Naive thymus-derived CD4-positive, alpha-beta T cell (primary cell): ENCODE measurements at regions of chr4 and their contacts with region 1.

Region 1: DNA sequence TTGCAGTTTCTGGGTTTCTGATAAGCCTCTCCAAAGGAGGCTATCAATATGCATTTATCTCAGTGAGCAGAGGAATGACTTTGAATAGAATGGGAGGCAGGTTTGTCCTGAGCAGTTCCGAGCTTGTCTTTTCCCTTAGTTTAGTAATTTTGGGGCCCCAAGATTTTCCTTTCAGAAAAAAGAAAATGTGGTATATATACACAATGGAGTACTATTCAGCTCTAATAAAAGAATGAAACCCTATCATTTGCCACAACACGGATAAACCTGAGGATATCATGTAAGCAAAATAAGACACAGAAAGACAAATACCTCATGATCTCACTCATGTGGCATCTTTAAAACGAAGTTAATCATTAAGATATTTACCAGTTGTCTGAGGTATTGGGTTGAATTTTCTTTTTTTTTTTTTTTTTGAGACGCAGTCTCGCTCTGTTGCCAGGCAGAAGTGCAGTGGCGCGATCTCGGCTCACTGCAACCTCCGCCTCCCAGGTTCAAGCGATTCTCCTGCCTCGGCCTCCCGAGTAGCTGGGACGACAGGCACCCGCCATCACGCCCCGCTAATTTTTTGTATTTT is 540 bp downstream of the ZNF721 start:
- DNase-seq: no peak
- ATAC-seq: peak; percentile 60
- H3K4me3 ChIP-seq: peak overlapping the region; percentile 96
- H3K4me3 Mint-ChIP-seq: peak overlapping the region; percentile 90 to 97 (median 94)
- H3K27ac ChIP-seq: peak overlapping the region; percentile 94
- H3K27ac Mint-ChIP-seq: peak overlapping the region; percentile 91 to 98 (median 97)
- H3K4me1 ChIP-seq: peaks cover 13 to 16% of the 10 kb centered on the region in 2 donors
- H3K4me1 Mint-ChIP-seq: peaks cover 19 to 53% (median 44%) of the 10 kb centered on the region in 7 donors
- H3K27me3 ChIP-seq: no peaks in the 10 kb centered on the region
- H3K27me3 Mint-ChIP-seq: no peaks in the 10 kb centered on the region

Region 2: GRCh38 chr4:473570-474457 is 24.6 kb before region 1 on chr4:
- CTCF ChIA-PET with region 1: no interaction called
- POLR2A ChIA-PET with region 1: interaction called, 7 read pairs
- intact Hi-C with region 1: loop called (anchors 1 kb)
- DNase-seq: peak; percentile 78 to 98 (median 96)
- ATAC-seq: peak; percentile 99
- H3K4me3 ChIP-seq: peak overlapping the region; percentile 93
- H3K4me3 Mint-ChIP-seq: peak overlapping the region; percentile 93 to 99 (median 98)
- H3K27ac ChIP-seq: peak overlapping the region; percentile 92
- H3K27ac Mint-ChIP-seq: peak overlapping the region; percentile 98 to 100 (median 100)
- H3K4me1 ChIP-seq: peaks cover 5 to 7% of the 10 kb centered on the region in 2 donors
- H3K4me1 Mint-ChIP-seq: peaks cover 17 to 47% (median 37%) of the 10 kb centered on the region in 7 donors
- H3K27me3 ChIP-seq: no peaks in the 10 kb centered on the region
- H3K27me3 Mint-ChIP-seq: no peaks in the 10 kb centered on the region

Region 3: GRCh38 chr4:663438-664428 is 165.3 kb after region 1 on chr4:
- CTCF ChIA-PET with region 1: no interaction called
- POLR2A ChIA-PET with region 1: interaction called, 3 read pairs
- intact Hi-C with region 1: loop called in 1 of 2 experiments (anchors 1 kb)
- DNase-seq: peak; percentile 59 to 77 (median 75)
- ATAC-seq: peak; percentile 91
- H3K4me3 ChIP-seq: peak overlapping the region; percentile 86
- H3K4me3 Mint-ChIP-seq: peak overlapping the region; percentile 72 to 95 (median 86)
- H3K27ac ChIP-seq: peak overlapping the region; percentile 90
- H3K27ac Mint-ChIP-seq: peak overlapping the region; percentile 48 to 93 (median 89)
- H3K4me1 ChIP-seq: peaks cover 4 to 5% of the 10 kb centered on the region in 2 donors
- H3K4me1 Mint-ChIP-seq: peaks cover 3 to 33% (median 13%) of the 10 kb centered on the region in 7 donors
- H3K27me3 ChIP-seq: no peaks in the 10 kb centered on the region
- H3K27me3 Mint-ChIP-seq: no peaks in the 10 kb centered on the region